HCT116 (cell line): ENCODE measurements at regions of chr5 and their contacts with region 1.

Region 1: DNA sequence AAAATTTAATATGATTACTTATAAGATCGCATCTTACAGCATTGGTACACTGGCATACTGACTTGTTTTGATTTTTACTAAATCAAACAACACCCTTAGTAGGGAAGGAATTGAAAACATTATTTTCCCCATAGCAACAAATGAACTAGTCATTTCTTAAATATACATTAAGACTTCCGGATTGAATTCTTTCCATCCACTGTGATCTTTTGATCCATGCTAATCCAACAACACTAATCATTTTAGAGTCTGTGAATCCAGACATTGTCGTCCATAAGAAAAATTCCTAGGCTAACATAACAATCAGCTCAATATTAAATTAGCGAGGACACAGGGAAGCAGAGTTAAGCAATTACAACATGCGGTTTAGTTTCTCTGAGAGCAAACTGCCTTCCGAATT is 21.6 kb upstream of the ERAP1 start:
- DNase-seq: no peak
- ATAC-seq: no peak
- H3K4me3 ChIP-seq: no peak overlapping the region
- H3K27ac ChIP-seq: no peak overlapping the region
- H3K4me1 ChIP-seq: no peaks in the 10 kb centered on the region
- H3K27me3 ChIP-seq: peaks cover 2% of the 10 kb centered on the region; the same call in 1 of the 2 replicates
- CTCF ChIP-seq: no peak
- POLR2A ChIP-seq: no peak
- RAD21 ChIP-seq: no peak

Region 2: DNA sequence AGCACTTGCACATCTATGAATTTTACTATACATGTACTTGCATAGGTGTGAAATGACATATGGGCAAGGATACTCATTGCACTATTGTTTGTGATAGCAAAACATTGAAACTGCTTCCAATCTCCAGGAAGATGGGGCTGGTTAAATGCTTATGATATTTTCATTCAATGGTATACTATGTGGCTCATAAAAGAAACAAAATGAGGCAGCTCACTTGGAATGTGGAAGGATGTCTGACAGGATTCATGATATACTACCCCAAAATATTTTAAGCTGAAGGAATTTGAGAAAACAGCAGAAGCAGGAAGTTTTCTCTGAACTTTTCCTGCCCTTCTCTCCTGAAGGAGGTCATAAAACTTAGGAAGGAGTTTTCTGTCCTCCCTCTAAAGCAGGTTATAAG is 266.7 kb before region 1 on chr5:
- CTCF ChIA-PET with region 1: no interaction called
- POLR2A ChIA-PET with region 1: no interaction called
- RAD21 ChIA-PET with region 1: no interaction called
- intact Hi-C with region 1: loop called (anchors 5 kb)
- DNase-seq: no peak
- ATAC-seq: no peak
- H3K4me3 ChIP-seq: no peak overlapping the region
- H3K27ac ChIP-seq: no peak overlapping the region
- H3K4me1 ChIP-seq: no peaks in the 10 kb centered on the region
- H3K27me3 ChIP-seq: peaks cover 9% of the 10 kb centered on the region; the same call in 1 of the 2 replicates
- CTCF ChIP-seq: no peak
- POLR2A ChIP-seq: no peak
- RAD21 ChIP-seq: no peak